A673 (cell line): ENCODE measurements at regions of chr1 and their contacts with region 1.

Region 1: DNA sequence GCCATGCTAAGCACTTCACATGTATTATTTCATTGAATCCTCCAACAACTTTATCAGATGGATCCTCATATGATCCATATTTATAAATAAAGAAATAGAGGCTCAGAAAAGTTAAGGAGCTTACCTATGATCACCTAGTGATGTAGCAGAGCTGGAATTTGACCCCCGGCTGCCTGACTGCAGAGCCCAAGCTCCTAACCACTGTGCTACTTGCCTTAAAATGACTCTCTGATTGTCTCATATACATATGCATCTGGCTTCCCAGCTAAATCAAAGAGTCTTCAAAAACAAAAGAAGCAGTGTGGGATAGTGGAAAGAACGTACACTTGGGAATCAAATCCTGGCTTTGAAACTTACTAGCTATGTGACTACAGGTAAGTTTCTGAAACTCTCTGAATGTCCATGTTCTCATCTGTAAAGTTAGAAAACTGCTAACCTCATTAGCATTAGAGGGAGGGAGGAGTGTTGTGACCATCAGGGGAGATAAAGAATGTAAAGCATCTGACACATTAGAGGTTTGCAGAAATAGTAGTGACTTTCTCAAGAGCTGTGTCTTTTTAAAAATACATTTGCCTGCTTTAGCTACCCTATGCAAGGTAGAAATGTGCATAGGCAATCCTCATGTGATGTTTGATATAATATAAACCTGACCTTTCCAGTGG is 67.2 kb upstream of the BARHL2 start:
- DNase-seq: no peak
- H3K4me3 ChIP-seq: no peak overlapping the region
- H3K27ac ChIP-seq: no peak overlapping the region
- H3K4me1 ChIP-seq: no peaks in the 10 kb centered on the region
- H3K27me3 ChIP-seq: no peaks in the 10 kb centered on the region
- CTCF ChIP-seq: no peak

Region 2: GRCh38 chr1:90745972-90746371 is 38.3 kb before region 1 on chr1:
- CTCF ChIA-PET with region 1: no interaction called
- POLR2A ChIA-PET with region 1: interaction called, 10 read pairs
- intact Hi-C with region 1: no loop called
- DNase-seq: no peak
- H3K4me3 ChIP-seq: no peak overlapping the region
- H3K27ac ChIP-seq: no peak overlapping the region
- H3K4me1 ChIP-seq: no peaks in the 10 kb centered on the region
- H3K27me3 ChIP-seq: no peaks in the 10 kb centered on the region
- CTCF ChIP-seq: no peak